B cell (primary cell): ENCODE measurements at regions of chr9 and their contacts with region 1.

Region 1: DNA sequence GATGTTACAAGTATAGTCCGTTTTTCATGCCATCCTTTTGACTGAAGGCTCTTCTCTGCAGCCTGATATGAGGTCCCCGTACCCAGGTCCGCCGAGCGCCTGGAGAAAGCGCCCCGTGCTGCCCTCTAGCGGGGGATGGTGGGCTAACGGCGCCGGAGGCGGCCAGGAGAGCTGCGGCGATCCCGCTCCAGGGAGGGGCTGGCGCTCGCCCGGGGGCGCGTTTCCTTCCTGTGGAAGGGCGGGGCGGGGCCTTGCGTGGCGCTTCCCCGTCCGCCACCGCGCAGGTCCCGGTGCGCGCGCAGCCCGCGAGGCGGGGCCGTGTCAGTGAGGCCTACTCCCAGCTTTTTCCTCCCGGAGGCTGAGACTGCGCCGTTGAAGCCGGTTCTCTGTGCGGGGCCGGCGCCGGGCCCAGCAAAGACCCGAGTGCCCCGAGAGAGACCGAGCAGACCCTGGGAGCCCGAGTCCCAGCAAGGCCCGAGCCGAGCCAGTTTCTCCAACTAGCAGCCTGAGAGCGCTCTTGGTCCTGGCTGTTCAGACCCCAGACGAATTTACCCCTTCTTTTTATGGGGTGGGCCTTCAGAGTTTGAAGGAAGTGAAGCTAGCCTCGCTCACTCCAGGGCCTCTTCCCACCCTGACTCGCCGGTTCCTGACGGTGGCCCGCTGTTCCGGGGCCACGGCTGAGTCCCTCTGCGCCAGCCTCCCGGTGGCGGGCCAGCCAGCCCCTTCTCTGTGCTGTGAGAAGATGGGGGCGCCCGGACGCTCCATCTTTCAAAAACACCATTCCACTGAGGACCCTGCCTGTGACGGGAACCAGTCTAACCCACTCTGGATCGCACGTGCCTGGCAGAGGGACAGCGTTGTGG is 9.7 kb upstream of the PHF2 start:
- DNase-seq: peak; percentile 97
- ATAC-seq: peak; percentile 99
- H3K4me3 ChIP-seq: peak overlapping the region; percentile 59 to 83 (median 74)
- H3K4me3 Mint-ChIP-seq: peak overlapping the region; percentile 88
- H3K27ac ChIP-seq: peak overlapping the region; percentile 87 to 92
- H3K27ac Mint-ChIP-seq: peak overlapping the region; percentile 93
- H3K4me1 ChIP-seq: peaks cover 21 to 24% of the 10 kb centered on the region in 2 donors
- H3K4me1 Mint-ChIP-seq: peaks cover 28% of the 10 kb centered on the region
- H3K27me3 ChIP-seq: no peaks in the 10 kb centered on the region
- H3K27me3 Mint-ChIP-seq: no peaks in the 10 kb centered on the region
- CTCF ChIP-seq: peak; percentile 96

Region 2: DNA sequence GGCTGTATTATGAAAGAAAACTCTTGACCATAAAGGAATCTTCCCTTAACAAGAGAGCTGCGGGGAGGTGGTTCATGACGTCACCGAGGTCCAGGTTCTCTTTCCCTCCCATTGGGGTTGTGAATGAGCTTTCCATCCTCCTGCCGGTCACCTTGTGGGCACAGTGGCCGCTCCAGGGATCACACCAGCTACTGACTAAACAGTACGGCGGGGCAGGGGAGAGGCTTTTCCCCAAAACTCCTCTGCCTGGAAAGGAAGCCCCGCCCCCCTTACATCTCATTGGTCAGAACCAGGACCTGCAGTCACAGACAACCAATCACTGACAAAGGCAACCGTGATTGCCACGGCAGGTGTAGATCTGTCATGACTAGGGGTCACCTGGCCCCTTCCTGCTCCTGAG is 1652.2 kb before region 1 on chr9:
- CTCF ChIA-PET with region 1: no interaction called
- POLR2A ChIA-PET with region 1: no interaction called
- intact Hi-C with region 1: no loop called
- DNase-seq: no peak
- ATAC-seq: no peak
- H3K4me3 ChIP-seq: no peak overlapping the region
- H3K4me3 Mint-ChIP-seq: no peak overlapping the region
- H3K27ac ChIP-seq: no peak overlapping the region
- H3K27ac Mint-ChIP-seq: no peak overlapping the region
- H3K4me1 ChIP-seq: no peaks in the 10 kb centered on the region
- H3K4me1 Mint-ChIP-seq: no peaks in the 10 kb centered on the region
- H3K27me3 ChIP-seq: peaks cover 0 to 3% (median 0%) of the 10 kb centered on the region in 4 experiments
- H3K27me3 Mint-ChIP-seq: peaks cover 22% of the 10 kb centered on the region
- CTCF ChIP-seq: no peak

Region 3: GRCh38 chr9:92877531-92878430 is 688.9 kb before region 1 on chr9 and contains the start of gene ZNF484:
- CTCF ChIA-PET with region 1: no interaction called
- POLR2A ChIA-PET with region 1: no interaction called
- intact Hi-C with region 1: loop called (anchors 2 kb)
- DNase-seq: peak; percentile 99
- ATAC-seq: peak; percentile 96
- H3K4me3 ChIP-seq: peak within 1 kb of the TSS; percentile 68 to 94 (median 78)
- H3K4me3 Mint-ChIP-seq: peak within 1 kb of the TSS; percentile 100
- H3K27ac ChIP-seq: peak within 1 kb of the TSS; percentile 85 to 93
- H3K27ac Mint-ChIP-seq: peak within 1 kb of the TSS; percentile 99
- H3K4me1 ChIP-seq: peaks cover 3 to 9% of the 10 kb centered on the region in 2 donors
- H3K4me1 Mint-ChIP-seq: peaks cover 31% of the 10 kb centered on the region
- H3K27me3 ChIP-seq: no peaks in the 10 kb centered on the region
- H3K27me3 Mint-ChIP-seq: no peaks in the 10 kb centered on the region
- CTCF ChIP-seq: no peak
- total RNA-seq, gene ZNF484: 22.7 and 22.9 TPM in 2 replicates

Region 4: DNA sequence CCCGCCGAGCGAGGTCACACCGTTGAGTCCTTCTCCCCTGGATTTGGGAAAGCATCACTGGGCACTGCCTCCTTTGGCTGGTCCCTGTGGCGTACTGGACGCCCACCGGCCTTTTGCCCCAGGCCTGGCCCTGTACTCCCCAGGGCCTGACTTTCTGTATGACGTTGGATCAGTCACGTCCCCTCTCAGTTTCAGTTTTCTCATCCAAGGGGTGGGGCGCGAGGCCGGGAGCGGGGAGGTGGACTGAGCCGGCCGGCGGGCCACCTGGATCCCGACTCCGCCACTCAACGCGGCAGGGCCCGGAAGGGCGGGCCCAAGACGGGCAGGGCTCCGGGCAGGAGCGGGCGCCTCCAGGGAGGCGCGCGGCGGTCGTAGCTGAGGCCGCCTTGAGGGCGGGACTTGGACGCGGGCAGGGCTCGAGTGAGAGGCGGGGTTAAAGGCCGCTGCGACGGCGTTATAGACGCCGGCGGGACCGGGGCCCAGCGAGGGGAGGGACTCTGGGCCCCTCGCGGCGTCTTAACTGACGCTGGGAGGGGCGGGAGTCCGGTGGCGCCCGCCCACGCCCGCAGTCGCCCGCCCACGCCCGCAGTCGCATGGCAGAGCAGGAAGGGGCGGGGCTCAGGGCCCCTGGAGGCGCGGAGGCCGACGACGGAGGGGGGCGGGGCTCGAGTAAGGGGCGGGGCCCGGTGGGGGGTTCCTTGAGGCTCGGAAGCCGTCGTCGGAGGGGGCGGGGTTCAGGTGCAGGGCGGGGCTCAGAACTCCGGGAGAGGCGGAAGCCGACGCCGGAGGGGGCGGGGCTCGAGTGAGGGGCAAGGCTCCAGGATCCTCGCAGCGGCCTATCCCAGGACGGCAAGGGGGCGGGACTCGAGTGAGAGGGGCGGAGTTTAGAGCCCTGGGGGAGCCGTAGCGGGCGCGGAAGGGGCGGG is 471.2 kb before region 1 on chr9:
- CTCF ChIA-PET with region 1: no interaction called
- POLR2A ChIA-PET with region 1: interaction called, 5 read pairs
- intact Hi-C with region 1: loop called (anchors 1 kb)
- DNase-seq: peak; percentile 100
- ATAC-seq: peak; percentile 81
- H3K4me3 ChIP-seq: peak overlapping the region in 4 of 5 experiments; percentile 58 to 81 (median 77)
- H3K4me3 Mint-ChIP-seq: peak overlapping the region; percentile 82
- H3K27ac ChIP-seq: peak overlapping the region; percentile 97 to 98
- H3K27ac Mint-ChIP-seq: peak overlapping the region; percentile 95
- H3K4me1 ChIP-seq: peaks cover 68 to 80% of the 10 kb centered on the region in 2 donors
- H3K4me1 Mint-ChIP-seq: peaks cover 76% of the 10 kb centered on the region
- H3K27me3 ChIP-seq: no peaks in the 10 kb centered on the region
- H3K27me3 Mint-ChIP-seq: no peaks in the 10 kb centered on the region
- CTCF ChIP-seq: no peak

Region 5: GRCh38 chr9:93464395-93464794 is 102.2 kb before region 1 on chr9:
- CTCF ChIA-PET with region 1: interaction called, 15 read pairs
- POLR2A ChIA-PET with region 1: no interaction called
- intact Hi-C with region 1: no loop called
- DNase-seq: peak; percentile 77
- ATAC-seq: peak; percentile 88
- H3K4me3 ChIP-seq: peak overlapping the region in 2 of 5 experiments; percentile 5 to 37
- H3K4me3 Mint-ChIP-seq: peak overlapping the region; percentile 70
- H3K27ac ChIP-seq: peak overlapping the region; percentile 67 to 85
- H3K27ac Mint-ChIP-seq: peak overlapping the region; percentile 91
- H3K4me1 ChIP-seq: peaks cover 61 to 63% of the 10 kb centered on the region in 2 donors
- H3K4me1 Mint-ChIP-seq: peaks cover 82% of the 10 kb centered on the region
- H3K27me3 ChIP-seq: no peaks in the 10 kb centered on the region
- H3K27me3 Mint-ChIP-seq: no peaks in the 10 kb centered on the region
- CTCF ChIP-seq: no peak

Region 6: DNA sequence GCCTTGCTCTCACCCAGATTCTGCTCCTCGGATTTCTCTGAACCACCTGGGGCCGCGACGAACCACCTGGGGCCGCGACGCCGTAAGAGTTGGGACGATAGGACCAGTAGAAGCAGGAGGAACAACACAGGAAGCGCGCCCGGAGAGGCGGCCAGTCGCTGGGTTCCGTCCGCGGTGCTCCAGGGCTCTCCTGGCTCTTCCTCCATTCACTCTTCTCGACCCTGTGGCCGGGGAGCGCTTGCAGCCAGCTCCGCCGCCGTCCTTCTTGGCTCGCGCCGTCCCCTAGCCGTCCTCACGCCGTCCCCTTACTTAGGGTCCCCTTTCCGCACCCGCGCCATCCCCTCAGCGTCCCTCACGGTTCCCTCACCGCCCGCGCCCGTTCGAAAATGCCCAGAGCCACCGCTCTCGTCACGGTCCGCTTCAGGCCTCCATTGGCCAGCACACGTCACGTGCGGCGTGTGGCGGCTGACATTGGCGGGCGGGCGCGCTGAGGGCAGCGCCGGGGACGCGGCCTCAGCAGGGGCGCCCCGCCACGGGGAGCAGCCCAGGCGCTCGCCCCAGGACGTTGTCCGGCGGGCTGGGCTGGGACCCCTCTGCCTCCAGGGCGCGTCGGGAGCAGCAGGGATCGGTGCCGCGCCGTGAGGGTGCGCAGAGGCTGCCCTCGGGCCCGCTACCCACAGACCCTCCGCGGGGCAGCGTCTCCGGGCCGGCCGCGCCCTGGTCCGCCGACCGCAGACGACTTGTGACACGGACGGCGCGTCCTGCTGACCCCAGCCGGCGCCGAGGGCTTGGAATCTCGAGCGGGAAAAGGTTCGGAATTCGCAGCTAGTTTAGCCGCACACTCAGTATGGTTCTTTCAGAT is 463.9 kb after region 1 on chr9:
- CTCF ChIA-PET with region 1: no interaction called
- POLR2A ChIA-PET with region 1: no interaction called
- intact Hi-C with region 1: loop called (anchors 2 kb)
- DNase-seq: peak; percentile 85
- ATAC-seq: peak; percentile 99
- H3K4me3 ChIP-seq: peak overlapping the region; percentile 58 to 90 (median 77)
- H3K4me3 Mint-ChIP-seq: peak overlapping the region; percentile 100
- H3K27ac ChIP-seq: peak overlapping the region; percentile 36 to 79
- H3K27ac Mint-ChIP-seq: peak overlapping the region; percentile 97
- H3K4me1 ChIP-seq: peaks cover 12 to 13% of the 10 kb centered on the region in 2 donors
- H3K4me1 Mint-ChIP-seq: peaks cover 15% of the 10 kb centered on the region
- H3K27me3 ChIP-seq: peaks cover 0 to 6% (median 0%) of the 10 kb centered on the region in 4 experiments
- H3K27me3 Mint-ChIP-seq: peaks cover 5% of the 10 kb centered on the region
- CTCF ChIP-seq: no peak